Sigmoid colon (tissue), 7 donors: ENCODE measurements at regions of chr1 and their contacts with region 1.

Region 1: GRCh38 chr1:36369061-36369861 is 16.5 kb downstream of the STK40 start:
- DNase-seq: peak; percentile 86
- H3K4me3 ChIP-seq: no peak overlapping the region
- H3K27ac ChIP-seq: peak overlapping the region in 3 of 4 donors; percentile 13 to 46 (median 33)
- H3K4me1 ChIP-seq: peaks cover 0 to 66% (median 60%) of the 10 kb centered on the region in 4 donors
- H3K27me3 ChIP-seq: no peaks in the 10 kb centered on the region
- CTCF ChIP-seq: peak; percentile 82 to 97 (median 94)
- EP300 ChIP-seq: no peak
- POLR2A ChIP-seq: no peak

Region 2: DNA sequence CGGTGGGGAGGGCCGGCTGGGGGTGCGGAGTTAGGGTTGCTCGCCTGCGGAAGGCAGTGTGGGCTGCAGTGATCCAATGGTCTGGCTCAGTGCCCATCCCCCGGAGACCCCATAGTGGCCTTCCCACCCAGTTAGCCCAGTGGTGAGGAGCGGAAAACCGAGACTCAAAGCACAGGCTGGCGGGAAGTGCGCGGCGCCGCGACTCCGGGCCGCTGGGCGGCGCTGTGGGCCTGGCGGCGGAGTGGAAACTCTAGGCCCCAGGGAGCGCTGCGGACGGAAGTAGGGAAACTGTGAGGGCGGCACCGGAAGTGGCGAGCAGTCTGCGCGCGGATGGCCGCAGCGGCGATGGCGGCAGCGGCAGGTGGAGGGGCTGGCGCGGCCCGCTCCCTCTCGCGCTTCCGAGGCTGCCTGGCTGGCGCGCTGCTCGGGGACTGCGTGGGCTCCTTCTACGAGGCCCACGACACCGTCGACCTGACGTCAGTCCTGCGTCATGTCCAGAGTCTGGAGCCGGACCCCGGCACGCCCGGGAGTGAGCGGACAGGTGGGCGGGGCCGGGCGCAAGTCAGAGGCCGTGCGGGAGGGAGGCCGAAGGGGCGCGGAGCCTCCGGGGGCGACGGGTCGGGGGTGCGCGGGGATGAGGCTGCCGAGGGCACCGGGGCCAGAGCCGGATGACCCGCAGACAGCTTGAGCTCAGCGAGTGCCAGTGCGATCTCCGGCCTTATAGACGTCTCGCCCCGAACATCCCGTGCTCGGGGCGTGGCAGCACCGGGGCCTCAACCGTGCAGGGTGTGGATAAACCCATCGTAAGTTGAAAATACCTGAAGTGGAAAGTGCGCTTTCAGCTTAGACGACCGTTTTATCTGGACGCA is 280.5 kb before region 1 on chr1 and contains the start of gene ADPRS:
- intact Hi-C with region 1: no loop called
- DNase-seq: peak; percentile 94
- H3K4me3 ChIP-seq: peak within 1 kb of the TSS; percentile 86 to 96 (median 94)
- H3K27ac ChIP-seq: peak within 1 kb of the TSS; percentile 88 to 92 (median 90)
- H3K4me1 ChIP-seq: peaks cover 0 to 42% (median 32%) of the 10 kb centered on the region in 4 donors
- H3K27me3 ChIP-seq: peaks cover 0 to 8% (median 0%) of the 10 kb centered on the region in 3 donors
- CTCF ChIP-seq: peak; percentile 99
- EP300 ChIP-seq: peak in 1 of 4 donors; percentile 49
- POLR2A ChIP-seq: peak; percentile 70 to 85
- total RNA-seq, gene ADPRS: 24.3 to 49.6 (median 37.0) TPM

Region 3: GRCh38 chr1:36306902-36307456 is 62.3 kb before region 1 on chr1:
- intact Hi-C with region 1: loop called (anchors 5 kb)
- DNase-seq: peak; percentile 96
- H3K4me3 ChIP-seq: peak overlapping the region; percentile 57 to 92 (median 71)
- H3K27ac ChIP-seq: peak overlapping the region; percentile 69 to 84 (median 78)
- H3K4me1 ChIP-seq: peaks cover 2 to 25% (median 17%) of the 10 kb centered on the region in 4 donors
- H3K27me3 ChIP-seq: no peaks in the 10 kb centered on the region
- CTCF ChIP-seq: no peak
- EP300 ChIP-seq: no peak
- POLR2A ChIP-seq: no peak

Region 4: DNA sequence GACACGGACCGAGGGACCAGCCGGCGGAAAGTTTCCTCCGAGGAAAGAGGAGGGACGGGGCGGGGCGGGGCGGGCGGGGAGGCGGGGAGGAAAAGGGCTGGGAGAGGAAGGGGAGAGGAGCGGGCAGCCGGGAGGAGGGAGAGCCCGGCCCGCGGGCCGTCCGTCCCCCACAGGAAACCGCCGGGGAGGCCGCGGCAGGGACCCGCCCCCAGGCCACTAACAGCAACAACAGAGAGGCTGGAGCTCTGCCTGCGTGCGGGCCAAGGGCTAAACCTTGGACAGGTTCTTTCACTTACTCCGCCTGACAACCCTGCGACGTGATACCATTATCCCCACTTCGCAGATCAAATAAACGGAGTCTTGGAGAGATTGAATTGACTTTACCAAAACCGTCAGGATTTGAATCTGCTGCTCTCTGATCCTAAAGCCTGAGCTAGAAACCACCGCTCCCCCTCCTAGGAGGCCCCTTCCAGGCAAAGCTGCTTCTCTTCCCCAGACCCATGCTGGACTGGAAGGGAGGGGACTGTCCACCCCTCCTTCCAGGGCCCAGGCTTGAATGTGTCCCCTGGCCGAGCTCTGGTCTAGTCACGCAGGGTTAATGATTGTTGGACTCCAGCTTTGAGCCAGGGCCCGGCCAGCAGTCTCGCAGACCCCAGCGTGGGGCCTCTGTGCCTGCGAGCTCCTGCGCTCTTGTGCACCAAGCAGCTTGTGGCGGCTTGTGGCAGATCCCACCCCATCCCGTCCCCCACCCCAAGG is 45.5 kb before region 1 on chr1 and contains the start of gene EVA1B:
- intact Hi-C with region 1: loop called (anchors 2 kb)
- DNase-seq: peak; percentile 94
- H3K4me3 ChIP-seq: peak within 1 kb of the TSS; percentile 53 to 85 (median 62)
- H3K27ac ChIP-seq: peak within 1 kb of the TSS; percentile 82 to 89 (median 84)
- H3K4me1 ChIP-seq: peaks cover 0 to 39% (median 33%) of the 10 kb centered on the region in 4 donors
- H3K27me3 ChIP-seq: no peaks in the 10 kb centered on the region
- CTCF ChIP-seq: no peak
- EP300 ChIP-seq: no peak
- POLR2A ChIP-seq: no peak
- total RNA-seq, gene EVA1B: 46.7 to 102 (median 71.0) TPM

Region 5: DNA sequence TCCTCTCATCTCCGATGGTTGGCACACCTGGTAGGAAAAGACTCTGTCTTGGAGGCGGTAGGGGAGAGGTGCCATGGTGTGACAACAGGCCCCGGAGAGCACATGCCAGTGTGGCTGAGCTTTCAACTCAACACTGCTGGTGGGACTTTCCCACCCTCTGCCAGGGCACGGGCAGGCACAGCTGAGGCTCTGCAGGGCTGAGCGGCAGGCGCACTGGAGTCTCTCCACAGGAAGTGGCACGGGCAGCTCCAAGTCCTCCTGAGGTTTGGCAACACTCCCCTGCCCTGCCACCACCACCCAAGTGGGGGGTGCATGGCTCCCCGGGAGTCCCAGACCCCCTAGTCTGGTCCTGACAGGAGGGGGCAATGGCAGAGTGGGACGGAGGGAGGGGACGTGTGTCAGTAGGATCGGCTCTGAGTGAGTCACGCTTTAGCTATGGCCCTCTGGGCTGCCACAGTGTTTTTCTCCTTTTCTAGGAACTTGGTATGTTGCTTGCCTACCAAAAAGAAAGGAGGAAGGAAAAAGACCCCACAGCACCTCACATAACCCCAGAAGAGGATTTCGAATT is 18.5 kb before region 1 on chr1:
- intact Hi-C with region 1: loop called (anchors 2 kb)
- DNase-seq: peak; percentile 77
- H3K4me3 ChIP-seq: no peak overlapping the region
- H3K27ac ChIP-seq: peak overlapping the region; percentile 77 to 88 (median 81)
- H3K4me1 ChIP-seq: peaks cover 0 to 47% (median 39%) of the 10 kb centered on the region in 4 donors
- H3K27me3 ChIP-seq: no peaks in the 10 kb centered on the region
- CTCF ChIP-seq: no peak
- EP300 ChIP-seq: no peak
- POLR2A ChIP-seq: no peak

Region 6: GRCh38 chr1:36420836-36421664 is 51.8 kb after region 1 on chr1:
- intact Hi-C with region 1: loop called (anchors 2 kb)
- DNase-seq: peak; percentile 92
- H3K4me3 ChIP-seq: no peak overlapping the region
- H3K27ac ChIP-seq: peak overlapping the region in 1 of 4 donors; percentile 38
- H3K4me1 ChIP-seq: peaks cover 0 to 7% (median 5%) of the 10 kb centered on the region in 4 donors
- H3K27me3 ChIP-seq: no peaks in the 10 kb centered on the region
- CTCF ChIP-seq: peak; percentile 88 to 94 (median 92)
- EP300 ChIP-seq: no peak
- POLR2A ChIP-seq: no peak